K562 (cell line): ENCODE measurements at regions of chr6 and their contacts with region 1.

Region 1: GRCh38 chr6:4018172-4018905 is 60.6 kb downstream of the FAM217A start:
- DNase-seq: peak; percentile 95 to 100 (median 96)
- ATAC-seq: peak; percentile 68
- H3K4me3 ChIP-seq: peak overlapping the region; percentile 80
- H3K27ac ChIP-seq: peak overlapping the region; percentile 90
- H3K4me1 ChIP-seq: peaks cover 10 to 14% of the 10 kb centered on the region in 2 experiments
- H3K27me3 ChIP-seq: no peaks in the 10 kb centered on the region
- CTCF ChIP-seq: peak; percentile 27 to 60 (median 50); a peak in 5 of 6 replicates
- EP300 ChIP-seq: peak; percentile 35
- POLR2A ChIP-seq: peak; percentile 93
- RAD21 ChIP-seq: no peak

Region 2: DNA sequence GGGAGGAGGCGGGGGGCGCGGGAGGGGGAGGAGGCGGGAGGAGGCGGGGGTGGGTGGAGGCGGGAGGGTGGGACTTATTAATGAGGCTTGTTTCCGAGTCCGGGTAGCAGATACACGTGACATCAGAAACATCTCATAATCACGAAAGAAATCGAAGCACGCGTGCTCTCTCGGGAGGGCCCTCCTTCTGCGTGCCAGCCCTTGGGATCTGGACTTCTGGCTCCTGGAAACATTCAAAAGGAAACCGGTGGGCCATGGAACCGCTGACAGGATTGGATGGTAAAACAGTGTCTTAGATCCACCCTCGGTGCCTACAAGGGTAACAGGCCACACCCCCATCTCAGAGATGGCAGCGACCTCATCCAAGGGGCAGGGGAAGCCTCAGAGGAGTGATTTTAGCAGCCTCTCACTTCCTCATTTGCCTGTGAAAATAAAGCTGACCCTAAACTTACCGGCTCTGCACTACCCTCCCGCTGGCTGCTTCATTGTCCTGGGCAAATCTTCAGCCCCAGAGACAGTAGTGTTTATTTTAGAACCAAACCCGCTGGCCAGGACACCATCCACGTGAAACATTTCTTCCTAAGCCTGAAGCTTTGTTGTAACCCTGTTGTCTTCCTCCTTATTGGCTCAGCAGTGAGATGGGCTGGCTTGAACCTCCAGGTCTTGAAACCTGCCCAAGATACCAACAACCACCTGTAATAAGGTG is 662.1 kb before region 1 on chr6:
- CTCF ChIA-PET with region 1: no interaction called
- POLR2A ChIA-PET with region 1: no interaction called
- in situ Hi-C with region 1: no loop called
- intact Hi-C with region 1: loop called (anchors 10 kb)
- DNase-seq: peak; percentile 78 to 96 (median 94)
- ATAC-seq: peak; percentile 60
- H3K4me3 ChIP-seq: peak overlapping the region; percentile 14; the same call in 1 of the 2 replicates
- H3K27ac ChIP-seq: peak overlapping the region; percentile 96
- H3K4me1 ChIP-seq: peaks cover 30 to 56% of the 10 kb centered on the region in 2 experiments
- H3K27me3 ChIP-seq: no peaks in the 10 kb centered on the region
- CTCF ChIP-seq: no peak
- EP300 ChIP-seq: 0 out of 2 replicates have a peak, but pooled peaks have one; percentile 17
- POLR2A ChIP-seq: no peak
- RAD21 ChIP-seq: no peak

Region 3: DNA sequence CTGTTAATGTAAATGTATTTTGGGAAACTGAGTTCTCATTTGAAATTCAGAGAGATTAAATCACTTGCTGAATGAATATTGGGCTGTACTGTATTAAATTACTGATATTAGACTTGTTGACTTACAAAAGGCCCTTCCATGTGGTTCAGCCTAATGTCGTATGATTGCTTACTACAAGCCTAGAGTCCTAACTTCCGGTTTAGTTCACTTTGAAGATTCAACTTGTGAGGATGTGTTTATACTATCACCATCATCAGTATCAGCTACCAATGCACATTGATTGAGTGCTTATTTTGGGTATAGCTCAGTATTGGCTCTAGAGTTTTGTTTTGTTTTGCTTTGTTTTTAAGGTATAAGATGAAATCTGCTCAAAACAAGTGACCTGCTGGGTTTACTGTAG is 12.3 kb after region 1 on chr6:
- CTCF ChIA-PET with region 1: no interaction called
- POLR2A ChIA-PET with region 1: interaction called, 41 read pairs
- in situ Hi-C with region 1: no loop called
- intact Hi-C with region 1: no loop called
- DNase-seq: no peak
- ATAC-seq: no peak
- H3K4me3 ChIP-seq: no peak overlapping the region
- H3K27ac ChIP-seq: no peak overlapping the region
- H3K4me1 ChIP-seq: peaks cover 9 to 24% of the 10 kb centered on the region in 2 experiments; a peak in 4 of 5 replicates
- H3K27me3 ChIP-seq: no peaks in the 10 kb centered on the region
- CTCF ChIP-seq: no peak
- EP300 ChIP-seq: no peak
- POLR2A ChIP-seq: no peak
- RAD21 ChIP-seq: no peak

Region 4: DNA sequence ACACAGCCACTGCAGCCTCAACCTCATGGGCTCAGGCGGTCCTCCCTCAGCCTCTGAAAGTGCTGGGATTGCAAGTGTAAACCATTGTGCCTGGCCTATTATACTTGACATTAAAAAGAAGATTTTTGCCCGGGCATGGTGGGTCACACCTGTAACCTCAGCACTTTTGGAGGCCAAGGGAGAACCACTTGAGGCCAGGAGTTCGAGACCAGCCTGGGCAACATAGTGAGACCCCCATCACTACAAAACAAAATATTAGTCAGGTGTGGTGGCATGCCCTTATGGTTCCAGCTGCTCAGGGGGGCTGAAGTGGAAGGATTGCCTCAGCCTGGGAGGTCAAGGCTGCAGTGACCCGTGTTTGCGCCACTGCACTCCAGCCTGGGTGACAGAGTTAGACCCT is 18.2 kb after region 1 on chr6:
- CTCF ChIA-PET with region 1: no interaction called
- POLR2A ChIA-PET with region 1: interaction called, 41 read pairs
- in situ Hi-C with region 1: no loop called
- intact Hi-C with region 1: no loop called
- DNase-seq: no peak
- ATAC-seq: peak; percentile 33; the same call in 2 of the 3 replicates
- H3K4me3 ChIP-seq: no peak overlapping the region
- H3K27ac ChIP-seq: no peak overlapping the region
- H3K4me1 ChIP-seq: peaks cover 0 to 5% of the 10 kb centered on the region in 2 experiments; a peak in 1 of 5 replicates
- H3K27me3 ChIP-seq: no peaks in the 10 kb centered on the region
- CTCF ChIP-seq: no peak
- EP300 ChIP-seq: no peak
- POLR2A ChIP-seq: no peak
- RAD21 ChIP-seq: no peak

Region 5: DNA sequence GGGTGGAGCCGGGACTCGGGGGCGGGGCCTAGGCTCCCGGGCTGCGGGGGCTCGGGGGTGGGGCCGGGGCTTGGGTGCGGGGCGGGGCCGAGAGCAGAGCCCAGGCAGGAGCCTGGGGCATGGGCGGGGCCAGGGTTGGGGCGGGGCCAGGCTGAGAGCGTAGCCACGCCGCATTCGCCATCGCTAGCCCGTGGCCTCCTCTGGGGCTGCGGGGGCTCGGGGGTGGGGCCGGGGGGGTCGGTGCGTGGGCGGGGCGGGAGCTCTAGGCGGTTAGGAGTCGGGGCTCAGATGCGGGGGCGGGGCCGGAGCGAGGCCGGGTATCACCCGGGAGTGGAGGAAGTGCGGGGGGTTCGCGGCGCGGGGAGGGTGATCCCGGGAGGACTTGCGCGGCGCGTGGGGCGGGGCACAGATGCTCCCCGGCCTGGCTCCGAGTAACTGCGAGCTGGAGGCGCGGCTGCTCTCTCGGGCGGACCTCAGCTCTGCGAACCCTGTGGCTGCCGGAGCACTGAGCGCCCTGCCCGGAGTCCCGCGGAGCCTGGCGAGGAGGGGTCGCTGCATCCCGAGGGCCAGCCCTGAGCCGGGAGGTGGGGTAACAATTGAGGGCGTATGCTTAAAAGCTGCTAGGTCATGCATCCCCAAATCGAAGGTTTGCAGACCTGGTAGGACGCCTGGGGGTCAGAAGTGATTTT is 117.5 kb after region 1 on chr6:
- CTCF ChIA-PET with region 1: no interaction called
- POLR2A ChIA-PET with region 1: interaction called, 3 read pairs
- in situ Hi-C with region 1: no loop called
- intact Hi-C with region 1: loop called (anchors 2 kb)
- DNase-seq: peak; percentile 98 to 99 (median 99)
- ATAC-seq: peak; percentile 88
- H3K4me3 ChIP-seq: peak overlapping the region; percentile 49
- H3K27ac ChIP-seq: peak overlapping the region; percentile 47
- H3K4me1 ChIP-seq: peaks cover 9 to 14% of the 10 kb centered on the region in 2 experiments
- H3K27me3 ChIP-seq: no peaks in the 10 kb centered on the region
- CTCF ChIP-seq: peak in 2 of 3 experiments; percentile 15 to 16; a peak in 2 of 6 replicates
- EP300 ChIP-seq: no peak
- POLR2A ChIP-seq: peak; percentile 57
- RAD21 ChIP-seq: 0 out of 4 replicates have a peak, but pooled peaks of 1 of the 2 experiments have one; percentile 13

Region 6: DNA sequence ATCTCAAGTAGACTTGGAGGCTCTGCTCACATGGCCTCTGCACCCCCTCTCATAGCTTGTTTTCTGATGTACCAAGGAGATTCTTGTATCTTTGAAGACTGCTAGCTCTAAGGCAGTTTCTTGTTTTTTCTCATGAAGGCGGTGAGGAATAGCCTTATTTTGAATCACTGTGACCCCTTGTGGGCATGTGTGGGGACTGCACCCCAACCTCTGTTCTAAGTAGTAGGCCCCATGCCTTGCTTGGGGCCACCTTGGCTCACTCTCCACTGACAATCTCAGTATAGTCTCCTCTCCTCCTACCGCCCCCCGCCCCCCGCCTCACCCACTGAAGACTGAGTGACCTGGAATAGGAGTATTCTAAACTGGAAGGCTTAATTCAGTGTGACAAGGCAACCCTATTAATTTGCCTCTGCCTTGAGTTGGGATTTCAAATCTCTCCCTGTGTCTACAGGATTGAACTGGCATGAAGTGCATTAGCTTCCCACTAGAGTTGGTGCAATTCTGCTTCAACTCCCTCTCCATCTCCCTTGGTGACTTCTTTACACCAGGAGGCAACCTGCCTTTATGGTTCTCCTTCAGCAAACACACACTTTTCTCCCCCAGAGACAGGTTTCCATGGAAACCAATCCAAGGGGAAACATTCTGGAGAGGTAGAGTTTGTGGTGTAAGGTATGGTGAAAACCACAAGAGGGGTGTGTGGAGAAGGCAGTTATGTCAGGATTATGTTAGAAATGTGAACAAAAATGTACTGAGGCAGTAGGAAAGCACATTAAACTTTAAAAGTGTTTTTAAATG is 192.5 kb after region 1 on chr6:
- CTCF ChIA-PET with region 1: no interaction called
- POLR2A ChIA-PET with region 1: no interaction called
- in situ Hi-C with region 1: no loop called
- intact Hi-C with region 1: no loop called
- DNase-seq: peak; percentile 65 to 72 (median 68)
- ATAC-seq: peak; percentile 97
- H3K4me3 ChIP-seq: no peak overlapping the region
- H3K27ac ChIP-seq: no peak overlapping the region
- H3K4me1 ChIP-seq: no peaks in the 10 kb centered on the region
- H3K27me3 ChIP-seq: peaks cover 0 to under 1% of the 10 kb centered on the region in 2 experiments; a peak in 1 of 5 replicates
- CTCF ChIP-seq: peak; percentile 73 to 92 (median 85)
- EP300 ChIP-seq: no peak
- POLR2A ChIP-seq: no peak
- RAD21 ChIP-seq: peak; percentile 74 to 90